ENCODE measurements at regions of chr22 and their contacts with region 1.

Region 1: DNA sequence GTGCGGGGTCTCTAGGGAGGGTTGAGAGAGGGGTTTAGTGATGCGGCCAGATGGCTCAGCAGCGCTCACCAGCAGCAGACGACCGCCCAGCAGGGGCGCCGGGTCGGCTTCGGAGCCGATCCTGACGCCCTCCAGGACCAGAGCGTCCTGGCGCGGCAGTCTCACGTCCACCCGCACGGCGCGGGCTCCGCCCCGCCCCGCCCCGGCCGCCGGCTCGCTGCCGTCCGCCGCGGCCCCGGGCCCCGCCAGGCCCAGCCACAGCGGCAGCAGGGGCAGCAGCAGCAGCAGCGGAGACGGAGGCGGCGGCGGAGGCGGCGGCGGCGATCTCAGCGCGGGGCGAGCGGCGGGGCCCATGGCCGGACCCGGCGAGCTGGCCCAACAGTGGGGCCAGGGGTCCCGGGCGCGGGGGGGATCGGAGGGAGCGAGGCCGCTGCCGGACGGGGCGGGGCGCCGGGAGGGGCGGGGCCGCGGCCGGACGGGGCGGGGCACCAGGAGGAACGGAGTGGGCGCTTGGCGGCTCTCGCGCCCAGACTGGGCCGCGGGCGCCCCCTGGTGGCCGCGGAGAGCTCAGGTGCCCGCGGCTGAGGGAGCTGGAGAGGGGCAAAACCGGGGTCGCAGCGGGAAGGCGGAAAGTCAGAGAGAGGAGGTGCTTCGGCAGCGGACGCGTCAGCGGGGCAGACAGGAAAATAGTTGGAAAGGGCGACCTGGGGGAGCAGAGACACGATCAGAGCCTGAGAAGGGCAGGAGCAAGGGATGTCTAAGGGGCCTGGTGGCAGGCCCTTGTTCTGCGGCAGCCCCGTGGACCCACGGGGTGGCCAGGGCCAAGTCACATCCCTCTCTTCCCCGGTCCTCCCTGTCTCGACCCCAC is at the start of gene RNF215:
- DNase-seq: peak; percentile 50 to 66
- ATAC-seq: peak; percentile 93 to 95
- H3K4me3 ChIP-seq: peak within 1 kb of the TSS; percentile 62 to 73 (median 66)
- H3K27ac ChIP-seq: peak within 1 kb of the TSS; percentile 58 to 71 (median 64)
- H3K4me1 ChIP-seq: peaks cover 7% of the 10 kb centered on the region in 2 donors
- H3K27me3 ChIP-seq: no peaks in the 10 kb centered on the region
- CTCF ChIP-seq: peak; percentile 86 to 98 (median 97)
- POLR2A ChIP-seq: no peak
- total RNA-seq, gene RNF215: 4.7 to 11.2 (median 8.1) TPM

Region 2: GRCh38 chr22:30104501-30105156 is 282.6 kb before region 1 on chr22:
- in situ Hi-C with region 1: loop called (anchors 25 kb)
- intact Hi-C with region 1: loop called (anchors 5 kb)
- DNase-seq: no peak
- ATAC-seq: no peak
- H3K4me3 ChIP-seq: no peak overlapping the region
- H3K27ac ChIP-seq: no peak overlapping the region
- H3K4me1 ChIP-seq: no peaks in the 10 kb centered on the region
- H3K27me3 ChIP-seq: no peaks in the 10 kb centered on the region
- CTCF ChIP-seq: no peak
- POLR2A ChIP-seq: no peak

Region 3: GRCh38 chr22:30262917-30263741 is 124.1 kb before region 1 on chr22:
- in situ Hi-C with region 1: loop called (anchors 5 to 10 kb)
- intact Hi-C with region 1: loop called (anchors 1 kb)
- DNase-seq: peak; percentile 39 to 50
- ATAC-seq: peak; percentile 55 to 62
- H3K4me3 ChIP-seq: peak overlapping the region; percentile 10 to 46 (median 22)
- H3K27ac ChIP-seq: no peak overlapping the region
- H3K4me1 ChIP-seq: no peaks in the 10 kb centered on the region
- H3K27me3 ChIP-seq: no peaks in the 10 kb centered on the region
- CTCF ChIP-seq: peak; percentile 92 to 97 (median 95)
- POLR2A ChIP-seq: no peak

Region 4: GRCh38 chr22:30289134-30289979 is 97.8 kb before region 1 on chr22 and contains the start of gene CASTOR1:
- in situ Hi-C with region 1: loop called in 3 of 4 experiments (anchors 5 to 10 kb)
- intact Hi-C with region 1: loop called (anchors 1 kb)
- DNase-seq: peak; percentile 98
- ATAC-seq: peak; percentile 90 to 91
- H3K4me3 ChIP-seq: peak within 1 kb of the TSS; percentile 74 to 97 (median 90)
- H3K27ac ChIP-seq: peak within 1 kb of the TSS; percentile 84 to 90 (median 87)
- H3K4me1 ChIP-seq: peaks cover 22 to 26% of the 10 kb centered on the region in 2 donors
- H3K27me3 ChIP-seq: no peaks in the 10 kb centered on the region
- CTCF ChIP-seq: no peak
- POLR2A ChIP-seq: peak; percentile 57 to 77
- total RNA-seq, gene CASTOR1: 3.5 to 6.5 (median 5.6) TPM

Region 5: DNA sequence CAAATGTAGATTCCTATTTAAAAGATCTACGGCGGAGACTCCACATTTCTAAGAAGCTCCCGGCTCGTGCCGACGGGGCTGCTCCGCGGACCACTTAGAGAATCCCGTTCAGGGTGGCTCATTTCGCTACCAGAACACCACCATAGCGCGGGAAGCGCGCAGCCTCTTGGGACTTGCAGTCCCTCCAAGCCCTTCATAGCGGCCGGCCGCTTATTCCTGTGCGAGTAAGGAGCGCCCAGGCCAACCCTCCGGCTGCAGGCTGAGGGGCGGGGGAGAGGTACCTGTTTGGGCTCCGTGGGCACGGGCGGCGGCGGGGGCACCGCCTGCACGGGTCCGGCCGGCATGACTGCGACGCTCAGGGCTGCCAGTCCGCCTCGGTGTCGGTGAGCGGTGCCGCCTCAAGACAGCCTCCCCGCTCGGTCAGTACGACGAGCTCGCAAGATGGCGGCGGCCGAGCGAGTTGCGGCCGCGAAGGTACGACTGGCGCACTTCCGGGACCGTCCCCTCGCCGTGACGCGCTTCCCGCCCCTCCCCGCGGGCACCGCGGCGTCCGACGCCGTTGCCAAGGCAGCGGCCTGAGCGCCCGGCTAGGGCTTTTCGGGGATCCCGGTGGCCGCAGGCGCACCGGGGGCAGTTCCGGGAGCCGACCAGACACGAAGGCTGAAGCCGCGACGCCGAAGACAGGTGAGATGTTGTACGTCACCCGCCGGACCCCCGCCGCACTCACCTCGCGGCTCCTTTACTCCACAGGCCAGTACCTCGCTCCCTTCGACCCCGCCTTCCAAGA is 30.6 kb before region 1 on chr22 and contains the starts of genes CCDC157 and SF3A1:
- in situ Hi-C with region 1: no loop called
- intact Hi-C with region 1: loop called (anchors 1 kb)
- DNase-seq: peak; percentile 75 to 81
- ATAC-seq: peak; percentile 98
- H3K4me3 ChIP-seq: peak within 1 kb of the TSS; percentile 78 to 98 (median 92)
- H3K27ac ChIP-seq: peak within 1 kb of the TSS; percentile 93 to 97 (median 94)
- H3K4me1 ChIP-seq: peaks cover 23 to 32% of the 10 kb centered on the region in 2 donors
- H3K27me3 ChIP-seq: no peaks in the 10 kb centered on the region
- CTCF ChIP-seq: no peak
- POLR2A ChIP-seq: peak; percentile 85 to 86
- total RNA-seq, gene CCDC157: 0.41 to 1.4 (median 1.1) TPM
- total RNA-seq, gene SF3A1: 36.0 to 145 (median 94.5) TPM

Region 6: GRCh38 chr22:30408414-30409104 is 21.4 kb after region 1 on chr22:
- in situ Hi-C with region 1: no loop called
- intact Hi-C with region 1: no loop called
- DNase-seq: peak in 1 of 2 donors; percentile 18
- ATAC-seq: peak; percentile 46 to 93
- H3K4me3 ChIP-seq: no peak overlapping the region
- H3K27ac ChIP-seq: peak overlapping the region in 1 of 4 donors; percentile 61
- H3K4me1 ChIP-seq: peaks cover 0 to 10% of the 10 kb centered on the region in 2 donors
- H3K27me3 ChIP-seq: no peaks in the 10 kb centered on the region
- CTCF ChIP-seq: no peak
- POLR2A ChIP-seq: no peak

Region 7: GRCh38 chr22:30444632-30445437 is 57.6 kb after region 1 on chr22:
- in situ Hi-C with region 1: no loop called
- intact Hi-C with region 1: no loop called
- DNase-seq: no peak
- ATAC-seq: peak in 1 of 2 donors; percentile 33
- H3K4me3 ChIP-seq: no peak overlapping the region
- H3K27ac ChIP-seq: no peak overlapping the region
- H3K4me1 ChIP-seq: no peaks in the 10 kb centered on the region
- H3K27me3 ChIP-seq: peaks cover 0 to 3% (median 0%) of the 10 kb centered on the region in 3 donors
- CTCF ChIP-seq: peak; percentile 14 to 68 (median 53)
- POLR2A ChIP-seq: no peak

Region 8: DNA sequence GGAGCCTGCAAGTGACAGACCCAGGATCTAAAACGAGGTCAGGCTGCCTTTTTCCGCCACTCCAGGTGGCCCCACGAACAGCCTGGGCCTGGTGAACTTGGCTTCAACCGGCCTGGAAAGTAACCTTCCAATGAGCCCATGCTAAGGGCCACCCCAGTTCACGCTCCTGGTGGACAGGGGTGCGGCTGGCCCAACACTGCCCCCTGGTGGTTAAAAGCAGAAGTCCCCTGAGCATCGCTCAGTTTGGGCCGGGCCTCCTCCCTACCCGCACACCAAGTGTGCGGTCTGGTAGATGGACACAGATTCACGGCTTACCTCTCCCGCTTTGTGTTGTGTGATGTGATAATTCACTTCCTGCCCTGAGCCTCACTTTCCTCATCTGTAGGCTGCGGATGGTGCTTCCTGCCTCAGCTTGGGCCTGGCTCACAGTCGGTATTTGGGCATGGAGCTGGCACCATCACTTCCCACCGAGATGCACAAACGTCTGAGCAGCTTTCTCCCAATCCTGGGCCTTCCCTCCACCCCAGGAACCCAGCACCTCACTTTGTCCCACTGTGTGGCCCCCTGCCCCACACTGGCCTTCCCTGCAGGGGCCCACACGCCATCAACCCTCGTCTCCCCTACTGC is 98.3 kb after region 1 on chr22:
- in situ Hi-C with region 1: loop called in 3 of 4 experiments (anchors 5 to 10 kb)
- intact Hi-C with region 1: loop called (anchors 1 kb)
- DNase-seq: peak; percentile 9 to 44
- ATAC-seq: peak; percentile 58 to 73
- H3K4me3 ChIP-seq: no peak overlapping the region
- H3K27ac ChIP-seq: no peak overlapping the region
- H3K4me1 ChIP-seq: no peaks in the 10 kb centered on the region
- H3K27me3 ChIP-seq: peaks cover 0 to 2% (median 0%) of the 10 kb centered on the region in 3 donors
- CTCF ChIP-seq: peak; percentile 63 to 97 (median 89)
- POLR2A ChIP-seq: no peak